Panc1 (cell line): ENCODE measurements at regions of chr17 and their contacts with region 1.

Region 1: GRCh38 chr17:40909351-40909750 is 24.3 kb upstream of the KRT20 start:
- DNase-seq: no peak
- ATAC-seq: peak; percentile 97
- H3K4me3 ChIP-seq: no peak overlapping the region
- H3K27ac ChIP-seq: peak overlapping the region; percentile 2; the same call in 1 of the 2 replicates
- H3K4me1 ChIP-seq: peaks cover 11% of the 10 kb centered on the region; the same call in 1 of the 2 replicates
- H3K27me3 ChIP-seq: no peaks in the 10 kb centered on the region; the same call in 1 of the 2 replicates
- CTCF ChIP-seq: peak; percentile 85

Region 2: GRCh38 chr17:40854159-40854814 is 55.1 kb before region 1 on chr17:
- CTCF ChIA-PET with region 1: no interaction called
- POLR2A ChIA-PET with region 1: no interaction called
- in situ Hi-C with region 1: no loop called
- intact Hi-C with region 1: loop called (anchors 2 kb)
- DNase-seq: peak; percentile 50
- ATAC-seq: peak; percentile 85
- H3K4me3 ChIP-seq: no peak overlapping the region
- H3K27ac ChIP-seq: no peak overlapping the region
- H3K4me1 ChIP-seq: peaks cover 5% of the 10 kb centered on the region; the same call in 1 of the 2 replicates
- H3K27me3 ChIP-seq: no peaks in the 10 kb centered on the region
- CTCF ChIP-seq: no peak

Region 3: DNA sequence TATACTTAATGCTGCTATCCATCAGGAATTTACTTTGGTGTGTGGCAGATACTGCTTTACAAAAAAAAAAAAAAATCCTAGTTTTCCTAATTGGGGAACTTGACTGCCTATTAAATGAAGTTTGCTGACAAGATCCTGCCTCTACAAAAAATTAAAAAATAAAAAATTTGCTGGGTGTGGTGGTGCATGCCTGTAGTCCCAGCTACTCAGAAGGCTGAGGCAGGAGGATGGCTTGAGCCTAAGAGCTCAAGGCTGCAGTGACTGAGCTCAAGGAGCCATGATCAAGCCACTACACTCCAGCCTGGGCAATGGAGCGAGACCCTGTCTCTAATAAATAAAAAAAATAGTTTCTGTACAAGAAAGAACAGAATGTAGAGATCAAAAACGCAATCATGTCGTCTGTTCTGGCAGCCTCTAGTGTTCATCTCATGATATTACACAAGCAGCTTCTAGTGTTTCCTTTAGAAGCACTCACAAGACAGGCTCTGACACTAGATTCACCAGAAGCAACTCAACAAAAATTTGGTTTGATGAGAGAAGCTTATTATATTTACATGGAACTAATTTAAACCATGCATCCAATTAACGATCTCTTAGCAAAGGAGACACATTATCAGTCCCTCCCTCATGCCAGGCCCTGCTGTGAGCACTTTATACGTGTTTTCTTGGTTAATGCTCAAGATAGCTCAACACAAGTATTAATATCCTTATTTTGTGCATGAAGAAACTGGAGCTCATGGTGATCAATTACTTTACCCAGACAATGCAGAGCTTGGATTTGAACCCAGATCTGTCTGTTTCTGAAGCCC is 412.9 kb after region 1 on chr17:
- CTCF ChIA-PET with region 1: interaction called, 11 read pairs
- POLR2A ChIA-PET with region 1: no interaction called
- in situ Hi-C with region 1: no loop called
- intact Hi-C with region 1: loop called (anchors 1 kb)
- DNase-seq: peak; percentile 57
- ATAC-seq: peak; percentile 72
- H3K4me3 ChIP-seq: no peak overlapping the region
- H3K27ac ChIP-seq: no peak overlapping the region
- H3K4me1 ChIP-seq: no peaks in the 10 kb centered on the region
- H3K27me3 ChIP-seq: no peaks in the 10 kb centered on the region
- CTCF ChIP-seq: peak; percentile 89

Region 4: GRCh38 chr17:41338961-41339485 is 429.7 kb after region 1 on chr17:
- CTCF ChIA-PET with region 1: no interaction called
- POLR2A ChIA-PET with region 1: no interaction called
- in situ Hi-C with region 1: no loop called
- intact Hi-C with region 1: loop called (anchors 5 kb)
- DNase-seq: no peak
- ATAC-seq: no peak
- H3K4me3 ChIP-seq: no peak overlapping the region
- H3K27ac ChIP-seq: no peak overlapping the region
- H3K4me1 ChIP-seq: no peaks in the 10 kb centered on the region
- H3K27me3 ChIP-seq: no peaks in the 10 kb centered on the region
- CTCF ChIP-seq: no peak

Region 5: GRCh38 chr17:41521574-41522261 is 612.4 kb after region 1 on chr17:
- CTCF ChIA-PET with region 1: no interaction called
- POLR2A ChIA-PET with region 1: no interaction called
- in situ Hi-C with region 1: no loop called
- intact Hi-C with region 1: loop called (anchors 10 kb)
- DNase-seq: peak; percentile 74
- ATAC-seq: peak; percentile 63
- H3K4me3 ChIP-seq: peak overlapping the region in 1 of 2 experiments; percentile 9; a peak in 1 of 4 replicates
- H3K27ac ChIP-seq: peak overlapping the region; percentile 96
- H3K4me1 ChIP-seq: peaks cover 86% of the 10 kb centered on the region
- H3K27me3 ChIP-seq: no peaks in the 10 kb centered on the region
- CTCF ChIP-seq: no peak